Cardiac septum (tissue), 1 donor: ENCODE measurements at regions of chr3 and their contacts with region 1.

Region 1: DNA sequence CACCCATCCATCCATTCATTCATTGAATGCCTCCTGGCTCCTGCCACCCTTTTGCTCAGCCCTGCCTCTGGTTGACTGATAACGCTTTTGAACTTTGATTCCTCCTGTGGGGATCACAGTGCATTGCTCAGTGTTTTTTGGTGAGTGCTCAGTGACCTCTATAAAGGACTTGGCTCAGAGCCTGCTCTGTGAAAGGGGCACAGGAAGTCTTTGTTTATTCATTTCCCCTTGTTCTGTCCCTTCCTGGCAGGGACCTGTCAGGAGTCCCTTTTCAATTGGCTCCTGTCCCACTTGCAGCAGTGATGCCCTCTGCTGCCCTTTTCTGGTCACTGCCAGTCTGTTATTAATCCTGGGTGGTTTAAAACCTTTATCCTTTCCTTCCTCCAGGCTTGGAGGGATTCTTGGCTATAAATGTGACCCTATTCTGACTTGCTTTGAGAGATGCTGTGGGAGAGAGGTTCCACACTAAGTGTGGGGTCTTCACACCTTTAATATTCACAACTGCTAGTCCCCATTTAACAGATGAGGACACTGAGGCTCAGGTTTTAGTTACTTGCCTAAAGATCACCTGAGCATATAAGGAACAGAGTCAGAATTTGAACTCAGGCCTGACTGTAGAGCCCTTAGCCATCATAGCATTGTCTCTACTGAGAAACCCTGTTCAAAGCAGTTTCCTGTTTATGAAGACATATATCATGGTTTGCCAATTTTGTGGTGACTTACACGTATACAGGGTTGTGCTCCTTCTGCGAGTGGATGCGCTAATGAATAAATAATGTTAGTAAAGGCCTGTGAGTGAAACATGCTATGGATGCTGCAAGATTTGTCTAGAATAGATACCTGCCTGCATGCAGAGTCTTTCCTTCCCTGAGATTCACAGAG is 23.2 kb upstream of the TATDN2 start:
- DNase-seq: peak; percentile 85

Region 2: DNA sequence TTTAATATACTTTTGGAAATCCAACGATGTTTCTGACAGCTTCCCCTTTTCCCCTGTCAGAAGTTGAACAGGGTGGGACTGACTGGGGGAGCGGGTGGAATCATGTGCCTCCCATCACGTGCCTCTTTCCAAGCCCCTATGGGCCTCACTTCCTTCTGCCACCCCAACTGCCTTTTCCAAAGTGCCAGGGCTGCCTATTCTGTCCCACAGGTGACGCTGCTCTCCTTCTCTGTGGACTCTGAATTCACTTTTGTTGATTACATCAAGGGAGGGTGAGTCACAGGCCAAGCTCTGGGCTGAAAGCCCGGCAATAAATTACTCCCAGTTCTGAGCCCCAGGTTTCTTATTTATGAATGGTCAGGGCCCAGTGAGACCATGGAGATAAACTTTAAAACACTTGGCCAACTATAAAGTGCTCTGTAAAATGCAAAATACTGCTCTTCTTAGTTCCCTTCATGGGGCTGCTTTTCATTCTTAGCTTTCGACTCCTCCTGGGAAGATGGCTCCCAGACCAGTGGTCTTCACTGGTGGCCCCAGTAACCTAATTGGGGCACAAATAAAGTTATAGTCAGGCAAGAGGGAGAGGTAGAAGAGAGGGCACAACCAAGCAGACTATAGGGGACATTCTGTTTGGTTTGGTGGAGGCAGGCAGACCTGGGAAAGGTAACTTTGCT is 509.1 kb before region 1 on chr3:
- intact Hi-C with region 1: loop called (anchors 10 kb)
- DNase-seq: peak; percentile 81

Region 3: DNA sequence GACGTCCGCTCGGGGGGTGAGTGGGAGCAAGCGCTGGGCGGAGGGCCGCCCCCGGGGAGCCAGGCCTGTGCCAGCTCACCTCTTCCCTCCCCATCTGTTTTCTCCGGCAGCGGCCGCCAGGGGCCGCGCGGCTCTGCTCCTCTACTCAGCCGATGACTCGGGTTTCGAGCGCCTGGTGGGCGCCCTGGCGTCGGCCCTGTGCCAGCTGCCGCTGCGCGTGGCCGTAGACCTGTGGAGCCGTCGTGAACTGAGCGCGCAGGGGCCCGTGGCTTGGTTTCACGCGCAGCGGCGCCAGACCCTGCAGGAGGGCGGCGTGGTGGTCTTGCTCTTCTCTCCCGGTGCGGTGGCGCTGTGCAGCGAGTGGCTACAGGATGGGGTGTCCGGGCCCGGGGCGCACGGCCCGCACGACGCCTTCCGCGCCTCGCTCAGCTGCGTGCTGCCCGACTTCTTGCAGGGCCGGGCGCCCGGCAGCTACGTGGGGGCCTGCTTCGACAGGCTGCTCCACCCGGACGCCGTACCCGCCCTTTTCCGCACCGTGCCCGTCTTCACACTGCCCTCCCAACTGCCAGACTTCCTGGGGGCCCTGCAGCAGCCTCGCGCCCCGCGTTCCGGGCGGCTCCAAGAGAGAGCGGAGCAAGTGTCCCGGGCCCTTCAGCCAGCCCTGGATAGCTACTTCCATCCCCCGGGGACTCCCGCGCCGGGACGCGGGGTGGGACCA is 292.0 kb before region 1 on chr3:
- intact Hi-C with region 1: loop called (anchors 10 kb)
- DNase-seq: peak; percentile 85

Region 4: DNA sequence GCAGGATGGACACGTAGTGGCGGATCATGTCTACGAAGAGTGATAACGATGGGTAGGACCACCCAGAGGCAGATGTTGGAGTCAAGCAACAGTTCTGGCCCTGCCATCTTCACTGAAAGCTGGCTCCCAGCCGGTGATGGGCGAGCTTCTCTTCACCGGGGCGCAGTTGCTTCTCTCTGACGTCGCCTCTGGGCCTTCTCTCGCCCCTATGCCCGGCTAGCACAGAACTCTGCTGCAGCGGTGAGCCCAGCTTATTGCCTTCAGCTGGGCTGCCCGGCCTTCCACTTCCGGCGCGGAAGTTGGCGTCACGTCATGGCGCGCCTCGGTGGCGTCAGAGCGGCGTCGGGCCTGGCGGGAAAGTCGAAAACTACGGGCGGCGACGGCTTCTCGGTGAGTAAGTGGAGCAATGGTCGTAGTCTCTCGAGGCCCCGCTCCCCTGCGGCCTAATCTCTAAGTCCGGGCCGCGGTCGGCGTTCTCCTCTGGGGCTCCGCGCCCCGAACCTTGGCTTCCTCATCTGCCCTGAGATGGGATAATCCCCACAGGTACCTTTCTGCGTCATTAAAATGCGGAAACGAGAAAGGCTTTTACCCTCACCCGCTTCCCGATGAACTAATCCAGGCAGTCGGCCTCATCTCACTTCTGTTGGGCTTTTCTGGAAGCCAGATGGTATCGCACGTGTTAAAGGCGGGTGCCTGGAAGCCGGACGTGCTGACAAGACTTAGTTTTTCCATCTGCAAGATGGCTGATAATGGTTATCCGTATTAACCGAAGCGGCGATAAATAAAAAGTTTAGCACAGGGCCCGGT is 198.7 kb before region 1 on chr3 and contains the start of gene FANCD2:
- intact Hi-C with region 1: loop called (anchors 10 kb)
- DNase-seq: peak; percentile 97
- total RNA-seq, gene FANCD2: 0.48 TPM

Region 5: DNA sequence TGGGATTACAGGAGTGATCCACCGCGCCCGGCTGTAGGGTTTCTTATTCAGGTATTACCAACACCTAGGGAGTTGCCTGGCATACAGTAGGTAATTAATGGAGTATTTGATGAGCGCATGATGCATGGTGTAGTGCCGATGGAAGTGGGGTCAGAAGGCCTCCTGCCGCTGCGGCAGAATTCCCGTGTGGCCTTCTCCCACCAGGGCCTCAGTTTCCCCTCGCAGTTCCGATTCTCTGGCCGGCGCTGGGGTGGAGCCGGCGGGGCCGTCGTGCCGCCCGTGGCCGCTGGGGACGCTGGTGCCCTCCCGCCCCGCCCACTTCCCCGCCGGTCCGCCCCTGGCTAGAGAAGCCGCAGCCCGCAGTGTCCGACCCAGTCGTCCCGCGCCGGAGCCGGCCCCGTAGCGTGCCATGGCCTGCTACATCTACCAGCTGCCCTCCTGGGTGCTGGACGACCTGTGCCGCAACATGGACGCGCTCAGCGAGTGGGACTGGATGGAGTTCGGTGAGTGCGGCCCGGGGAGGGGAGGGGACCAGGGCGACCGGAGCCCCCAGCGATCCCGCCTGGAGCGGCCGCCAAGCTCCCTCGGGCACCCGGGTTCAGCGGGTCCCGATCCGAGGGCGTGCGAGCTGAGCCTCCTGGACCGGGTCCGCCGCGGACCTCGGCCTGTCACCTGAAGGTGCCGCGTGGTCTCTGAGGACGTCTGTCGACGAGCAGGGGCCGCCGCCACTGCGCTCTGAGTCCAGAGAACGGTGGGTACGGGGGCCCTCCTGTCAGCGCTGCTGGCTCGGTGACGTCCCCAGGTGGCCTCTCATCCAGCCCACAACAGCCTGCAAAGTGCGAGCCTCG is 60.3 kb before region 1 on chr3 and contains the start of gene IRAK2:
- intact Hi-C with region 1: loop called (anchors 1 kb)
- DNase-seq: peak; percentile 92
- total RNA-seq, gene IRAK2: 1.9 TPM

Region 6: DNA sequence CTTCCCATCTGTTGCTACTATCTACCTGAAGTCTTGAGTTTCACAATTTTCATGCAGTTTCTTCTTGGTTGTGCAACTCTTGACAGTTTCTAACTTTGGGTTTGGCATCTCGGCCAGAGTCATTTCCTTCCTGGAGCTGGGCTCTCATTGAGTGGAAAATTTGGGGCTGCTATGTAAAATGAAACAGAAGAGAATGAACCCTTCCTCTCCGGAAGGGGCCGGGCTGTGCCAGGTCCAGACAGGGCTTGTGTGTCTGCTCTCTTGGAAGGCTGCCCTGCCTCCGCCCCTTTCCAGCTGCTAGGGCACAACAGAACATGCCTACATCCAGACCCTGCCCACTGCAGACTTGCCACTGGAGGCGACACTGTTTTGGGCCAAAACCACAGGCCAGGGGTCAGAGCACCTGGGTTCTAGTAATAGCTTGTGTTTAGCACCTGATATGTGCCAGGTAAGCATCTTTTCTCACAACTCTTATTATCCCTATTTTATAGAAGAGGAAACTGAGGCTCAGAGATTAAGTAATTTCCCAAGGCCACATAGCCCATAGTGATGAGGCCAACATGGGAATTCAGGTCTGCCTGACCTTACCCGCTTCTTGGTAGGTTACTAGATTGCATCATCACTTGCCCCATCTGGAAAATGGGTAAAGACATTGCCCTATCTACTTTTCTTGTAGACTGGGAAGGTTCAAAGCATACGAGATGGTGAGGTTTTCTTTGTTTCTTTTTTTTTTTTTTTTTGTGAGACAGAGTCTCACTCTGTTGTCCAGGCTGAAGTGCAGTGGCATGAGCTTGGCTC is 35.3 kb before region 1 on chr3:
- intact Hi-C with region 1: loop called (anchors 5 kb)
- DNase-seq: peak; percentile 91

Region 7: GRCh38 chr3:10273702-10274305 is 48.8 kb after region 1 on chr3:
- intact Hi-C with region 1: no loop called
- DNase-seq: no peak